Transverse colon (tissue), 4 donors: ENCODE measurements at regions of chr17 and their contacts with region 1.

Region 1: GRCh38 chr17:74916136-74916850 is 6.8 kb downstream of the USH1G start:
- DNase-seq: no peak
- H3K4me3 ChIP-seq: no peak overlapping the region
- H3K27ac ChIP-seq: no peak overlapping the region
- H3K4me1 ChIP-seq: no peaks in the 10 kb centered on the region
- H3K27me3 ChIP-seq: peaks cover 30% of the 10 kb centered on the region
- CTCF ChIP-seq: no peak
- EP300 ChIP-seq: no peak
- POLR2A ChIP-seq: no peak

Region 2: GRCh38 chr17:74946641-74947040 is 30.3 kb after region 1 on chr17:
- in situ Hi-C with region 1: no loop called
- intact Hi-C with region 1: loop called (anchors 1 kb)
- DNase-seq: no peak
- H3K4me3 ChIP-seq: no peak overlapping the region
- H3K27ac ChIP-seq: no peak overlapping the region
- H3K4me1 ChIP-seq: no peaks in the 10 kb centered on the region
- H3K27me3 ChIP-seq: peaks cover 47% of the 10 kb centered on the region
- CTCF ChIP-seq: no peak
- EP300 ChIP-seq: no peak
- POLR2A ChIP-seq: no peak